K562 (cell line): ENCODE measurements at regions of chr12 and their contacts with region 1.

Region 1: DNA sequence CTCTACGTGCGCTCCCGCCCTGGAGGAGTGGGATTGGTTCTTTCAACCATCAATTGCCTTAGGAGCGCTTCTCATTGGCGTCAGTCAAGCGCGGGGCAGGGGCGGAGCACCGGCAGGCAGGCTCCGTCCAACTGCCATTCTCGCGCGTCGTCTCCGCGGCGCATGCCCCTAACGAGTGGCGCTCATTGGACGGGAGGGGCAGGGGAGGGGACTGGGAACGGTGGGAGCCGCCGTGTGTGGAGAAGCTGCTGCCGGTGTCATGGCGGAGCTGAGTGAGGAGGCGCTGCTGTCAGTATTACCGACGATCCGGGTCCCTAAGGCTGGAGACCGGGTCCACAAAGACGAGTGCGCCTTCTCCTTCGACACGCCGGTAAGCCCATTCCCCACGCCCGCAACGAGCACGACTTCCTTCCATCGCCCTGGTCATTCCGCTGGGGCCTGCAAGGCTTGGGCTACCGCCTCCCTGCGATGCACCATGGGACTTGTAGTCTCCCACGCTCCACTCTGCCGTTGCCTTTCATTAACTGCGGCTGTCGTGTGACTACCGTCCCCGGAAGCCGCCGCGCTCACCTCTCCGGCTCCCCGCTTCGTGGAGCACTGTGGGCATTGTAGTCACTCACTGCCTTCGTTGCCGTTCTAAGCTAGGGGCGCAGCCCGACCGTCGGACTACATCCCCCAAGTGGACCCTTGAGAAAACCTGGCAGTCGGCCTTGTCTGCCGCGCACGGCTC is at the start of gene USP5:
- DNase-seq: peak; percentile 87 to 98 (median 90)
- ATAC-seq: peak; percentile 87
- H3K4me3 ChIP-seq: peak within 1 kb of the TSS; percentile 79
- H3K27ac ChIP-seq: peak within 1 kb of the TSS; percentile 87
- H3K4me1 ChIP-seq: peaks cover 12 to 18% of the 10 kb centered on the region in 2 experiments; a peak in 4 of 5 replicates
- H3K27me3 ChIP-seq: no peaks in the 10 kb centered on the region
- CTCF ChIP-seq: 0 out of 6 replicates have a peak, but pooled peaks of 1 of the 3 experiments have one; percentile 1
- EP300 ChIP-seq: no peak
- POLR2A ChIP-seq: peak; percentile 79
- RAD21 ChIP-seq: no peak
- polyA plus RNA-seq, gene USP5: 1.4 to 3.4 TPM

Region 2: DNA sequence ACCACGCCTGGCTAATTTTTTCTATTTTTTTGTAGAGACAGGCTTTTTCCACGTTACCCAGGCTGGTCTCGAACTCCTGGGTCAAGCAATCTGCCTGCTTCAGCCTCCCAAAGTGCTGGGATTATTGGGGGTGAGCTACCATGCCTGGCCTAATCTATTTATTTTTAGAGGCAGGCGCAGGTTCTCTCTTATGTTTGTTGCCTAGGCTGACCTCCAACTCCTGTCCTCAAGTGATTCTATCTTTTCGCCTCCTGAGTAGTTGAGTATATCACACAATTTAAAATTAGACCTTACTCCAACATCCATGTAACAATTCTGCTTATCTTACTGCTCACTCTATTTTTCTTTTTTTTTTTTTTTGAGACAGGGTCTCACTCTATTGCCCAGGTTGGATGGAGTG is 198.1 kb before region 1 on chr12:
- CTCF ChIA-PET with region 1: no interaction called
- POLR2A ChIA-PET with region 1: no interaction called
- in situ Hi-C with region 1: no loop called
- intact Hi-C with region 1: no loop called
- DNase-seq: no peak
- ATAC-seq: no peak
- H3K4me3 ChIP-seq: no peak overlapping the region
- H3K27ac ChIP-seq: no peak overlapping the region
- H3K4me1 ChIP-seq: no peaks in the 10 kb centered on the region; a peak in 2 of 5 replicates
- H3K27me3 ChIP-seq: no peaks in the 10 kb centered on the region
- CTCF ChIP-seq: no peak
- EP300 ChIP-seq: no peak
- POLR2A ChIP-seq: no peak
- RAD21 ChIP-seq: no peak

Region 3: GRCh38 chr12:6821591-6822425 is 30.3 kb before region 1 on chr12 and contains the start of gene GPR162:
- CTCF ChIA-PET with region 1: no interaction called
- POLR2A ChIA-PET with region 1: no interaction called
- in situ Hi-C with region 1: no loop called
- intact Hi-C with region 1: no loop called
- DNase-seq: peak; percentile 61 to 79 (median 72)
- ATAC-seq: peak; percentile 61
- H3K4me3 ChIP-seq: peak within 1 kb of the TSS; percentile 28
- H3K27ac ChIP-seq: no peak within 1 kb of the TSS
- H3K4me1 ChIP-seq: peaks cover 8 to 27% of the 10 kb centered on the region in 2 experiments; a peak in 4 of 5 replicates
- H3K27me3 ChIP-seq: peaks cover 0 to 4% of the 10 kb centered on the region in 2 experiments; a peak in 2 of 5 replicates
- CTCF ChIP-seq: no peak
- EP300 ChIP-seq: no peak
- POLR2A ChIP-seq: no peak
- RAD21 ChIP-seq: no peak
- polyA plus RNA-seq, gene GPR162: not detected

Region 4: GRCh38 chr12:6839482-6840201 is 12.4 kb before region 1 on chr12:
- CTCF ChIA-PET with region 1: no interaction called
- POLR2A ChIA-PET with region 1: interaction called, 39 read pairs
- in situ Hi-C with region 1: no loop called
- intact Hi-C with region 1: no loop called
- DNase-seq: no peak
- ATAC-seq: no peak
- H3K4me3 ChIP-seq: no peak overlapping the region
- H3K27ac ChIP-seq: no peak overlapping the region
- H3K4me1 ChIP-seq: peaks cover 10 to 45% of the 10 kb centered on the region in 2 experiments; a peak in 4 of 5 replicates
- H3K27me3 ChIP-seq: no peaks in the 10 kb centered on the region
- CTCF ChIP-seq: no peak
- EP300 ChIP-seq: no peak
- POLR2A ChIP-seq: no peak
- RAD21 ChIP-seq: no peak

Region 5: DNA sequence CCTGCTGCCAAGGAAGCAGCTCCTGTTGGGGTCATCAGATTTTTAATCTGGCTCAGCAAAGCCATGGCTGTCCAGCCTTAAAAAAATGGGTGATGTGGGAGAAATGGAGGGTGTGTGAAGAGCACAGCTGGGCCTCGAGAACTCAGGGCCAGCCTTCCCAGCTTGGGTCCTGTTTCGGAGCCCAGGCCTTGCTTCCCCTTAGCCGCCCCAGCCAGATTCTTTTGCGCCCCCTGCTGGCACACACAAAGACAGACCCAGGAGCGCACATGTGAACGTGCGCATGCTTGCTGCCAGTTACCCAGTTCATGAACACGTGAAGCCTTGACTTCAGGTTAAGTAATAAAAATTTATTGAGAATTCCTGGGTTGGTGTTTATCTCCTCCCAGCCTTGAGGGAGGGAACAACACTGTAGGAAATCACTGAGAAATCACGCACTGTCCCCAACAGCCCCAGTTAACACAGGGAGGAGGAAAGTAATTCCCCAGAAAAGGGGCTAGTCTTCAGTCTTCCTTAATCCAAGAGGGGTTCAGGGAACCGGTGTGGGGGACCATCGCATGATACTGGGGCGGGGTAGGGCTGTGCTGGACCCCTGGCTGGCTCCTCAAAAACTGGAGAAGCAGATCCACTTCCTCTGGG is 113.1 kb after region 1 on chr12:
- CTCF ChIA-PET with region 1: no interaction called
- POLR2A ChIA-PET with region 1: no interaction called
- in situ Hi-C with region 1: no loop called
- intact Hi-C with region 1: no loop called
- DNase-seq: peak; percentile 52 to 91 (median 67)
- ATAC-seq: peak; percentile 76
- H3K4me3 ChIP-seq: no peak overlapping the region
- H3K27ac ChIP-seq: peak overlapping the region; percentile 83
- H3K4me1 ChIP-seq: peaks cover 57 to 72% of the 10 kb centered on the region in 2 experiments
- H3K27me3 ChIP-seq: no peaks in the 10 kb centered on the region
- CTCF ChIP-seq: peak; percentile 83 to 86 (median 84)
- EP300 ChIP-seq: no peak
- POLR2A ChIP-seq: peak; percentile 50
- RAD21 ChIP-seq: peak; percentile 62 to 65